Transverse colon (tissue), 4 donors: ENCODE measurements at regions of chrX and their contacts with region 1.

Region 1: DNA sequence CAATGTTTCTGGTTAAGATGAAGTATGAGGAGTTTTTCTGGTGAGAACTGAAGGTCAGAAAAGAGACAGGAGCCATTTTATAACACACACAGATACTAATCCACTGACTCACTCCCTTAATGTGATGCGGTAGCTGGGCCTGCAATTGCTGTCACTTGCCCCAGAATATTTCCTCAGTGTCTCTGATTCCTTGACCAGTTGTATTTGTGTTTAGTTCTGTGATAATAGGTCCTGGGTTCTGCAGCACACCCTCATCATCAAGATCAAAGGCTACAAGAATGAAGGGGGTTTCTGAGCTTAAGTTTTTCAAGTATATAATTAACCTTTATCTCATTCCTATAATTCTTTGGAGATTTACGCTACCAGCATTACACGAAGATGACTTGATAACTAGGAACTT is 576.5 kb upstream of the CPXCR1 start:
- DNase-seq: no peak
- H3K4me3 ChIP-seq: no peak overlapping the region
- H3K27ac ChIP-seq: no peak overlapping the region
- H3K4me1 ChIP-seq: no peaks in the 10 kb centered on the region
- H3K27me3 ChIP-seq: no peaks in the 10 kb centered on the region
- CTCF ChIP-seq: no peak
- EP300 ChIP-seq: no peak
- POLR2A ChIP-seq: no peak

Region 2: DNA sequence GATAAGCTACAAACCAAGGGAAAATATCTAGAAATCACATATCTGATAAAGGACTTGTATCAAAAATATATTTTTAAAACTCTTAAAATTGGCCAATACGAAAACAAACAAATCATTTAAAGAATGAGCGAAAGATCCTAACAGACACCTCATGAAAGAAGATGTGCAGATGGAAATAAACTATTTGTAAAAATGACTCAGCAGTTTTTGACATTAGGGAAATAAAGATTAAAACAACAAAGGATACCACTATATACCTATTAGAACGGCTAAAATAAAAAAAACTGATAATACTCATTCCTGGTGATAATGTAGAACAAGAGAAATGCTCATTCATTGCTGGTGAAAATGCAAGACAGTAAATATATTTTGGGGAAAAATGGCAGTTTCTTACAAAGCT is 146.5 kb before region 1 on chrX:
- in situ Hi-C with region 1: loop called in 1 of 4 experiments (anchors 25 kb)
- intact Hi-C with region 1: no loop called
- DNase-seq: no peak
- H3K4me3 ChIP-seq: no peak overlapping the region
- H3K27ac ChIP-seq: no peak overlapping the region
- H3K4me1 ChIP-seq: no peaks in the 10 kb centered on the region
- H3K27me3 ChIP-seq: no peaks in the 10 kb centered on the region
- CTCF ChIP-seq: no peak
- EP300 ChIP-seq: no peak
- POLR2A ChIP-seq: no peak

Region 3: DNA sequence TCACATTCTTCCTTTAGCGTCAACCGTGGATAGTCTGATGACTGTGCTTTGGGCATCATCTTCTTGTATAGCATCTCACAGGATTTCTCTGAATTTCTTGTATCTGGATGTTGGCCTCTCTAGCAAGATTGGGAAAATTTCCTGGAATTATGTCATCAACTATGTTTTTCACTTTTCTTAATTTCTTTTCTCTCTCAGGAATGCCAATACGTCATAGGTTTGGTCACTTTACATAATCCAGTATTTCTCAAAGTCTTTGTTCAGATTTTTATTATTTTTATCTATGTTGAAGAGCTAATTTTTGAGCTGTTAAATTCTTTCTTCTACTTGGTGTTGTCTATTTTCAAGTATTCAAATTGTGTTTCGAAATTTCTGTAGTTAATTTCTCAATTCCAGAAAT is 410.8 kb after region 1 on chrX:
- in situ Hi-C with region 1: no loop called
- intact Hi-C with region 1: no loop called
- DNase-seq: no peak
- H3K4me3 ChIP-seq: no peak overlapping the region
- H3K27ac ChIP-seq: no peak overlapping the region
- H3K4me1 ChIP-seq: no peaks in the 10 kb centered on the region
- H3K27me3 ChIP-seq: no peaks in the 10 kb centered on the region
- CTCF ChIP-seq: no peak
- EP300 ChIP-seq: no peak
- POLR2A ChIP-seq: no peak